Calu3 (cell line): ENCODE measurements at regions of chr4 and their contacts with region 1.

Region 1: GRCh38 chr4:143482840-143483239 is 30.7 kb upstream of the SMARCA5 start:
- DNase-seq: peak; percentile 24
- H3K4me3 Mint-ChIP-seq: no peak overlapping the region
- H3K27ac Mint-ChIP-seq: no peak overlapping the region
- H3K4me1 Mint-ChIP-seq: peaks cover 9% of the 10 kb centered on the region
- H3K27me3 Mint-ChIP-seq: no peaks in the 10 kb centered on the region
- CTCF ChIP-seq: no peak

Region 2: GRCh38 chr4:142984871-142985585 is 497.8 kb before region 1 on chr4:
- CTCF ChIA-PET with region 1: no interaction called
- intact Hi-C with region 1: loop called (anchors 5 kb)
- DNase-seq: peak; percentile 39
- H3K4me3 Mint-ChIP-seq: no peak overlapping the region
- H3K27ac Mint-ChIP-seq: no peak overlapping the region
- H3K4me1 Mint-ChIP-seq: peaks cover 27% of the 10 kb centered on the region
- H3K27me3 Mint-ChIP-seq: no peaks in the 10 kb centered on the region
- CTCF ChIP-seq: peak; percentile 58

Region 3: GRCh38 chr4:143207557-143207956 is 275.3 kb before region 1 on chr4:
- CTCF ChIA-PET with region 1: interaction called, 5 read pairs
- intact Hi-C with region 1: loop called (anchors 2 kb)
- DNase-seq: no peak
- H3K4me3 Mint-ChIP-seq: no peak overlapping the region
- H3K27ac Mint-ChIP-seq: no peak overlapping the region
- H3K4me1 Mint-ChIP-seq: no peaks in the 10 kb centered on the region
- H3K27me3 Mint-ChIP-seq: no peaks in the 10 kb centered on the region
- CTCF ChIP-seq: no peak

Region 4: GRCh38 chr4:143375313-143376073 is 107.3 kb before region 1 on chr4:
- CTCF ChIA-PET with region 1: no interaction called
- intact Hi-C with region 1: loop called (anchors 5 kb)
- DNase-seq: peak; percentile 36
- H3K4me3 Mint-ChIP-seq: no peak overlapping the region
- H3K27ac Mint-ChIP-seq: no peak overlapping the region
- H3K4me1 Mint-ChIP-seq: peaks cover 9% of the 10 kb centered on the region
- H3K27me3 Mint-ChIP-seq: no peaks in the 10 kb centered on the region
- CTCF ChIP-seq: peak; percentile 23

Region 5: GRCh38 chr4:143399113-143399949 is 83.5 kb before region 1 on chr4:
- CTCF ChIA-PET with region 1: no interaction called
- intact Hi-C with region 1: loop called (anchors 5 kb)
- DNase-seq: peak; percentile 17
- H3K4me3 Mint-ChIP-seq: no peak overlapping the region
- H3K27ac Mint-ChIP-seq: no peak overlapping the region
- H3K4me1 Mint-ChIP-seq: peaks cover 10% of the 10 kb centered on the region
- H3K27me3 Mint-ChIP-seq: no peaks in the 10 kb centered on the region
- CTCF ChIP-seq: peak; percentile 21